MCF 10A (cell line): ENCODE measurements at regions of chr1 and their contacts with region 1.

Region 1: GRCh38 chr1:39954816-39955546 is at the start of gene MFSD2A:
- DNase-seq: peak; percentile 95
- H3K4me3 Mint-ChIP-seq: peak within 1 kb of the TSS; percentile 82
- H3K27ac Mint-ChIP-seq: peak within 1 kb of the TSS; percentile 88
- H3K4me1 Mint-ChIP-seq: peaks cover 22% of the 10 kb centered on the region
- H3K27me3 Mint-ChIP-seq: no peaks in the 10 kb centered on the region
- CTCF ChIP-seq: no peak
- total RNA-seq, gene MFSD2A: 49.1 and 52.9 TPM in 2 replicates

Region 2: DNA sequence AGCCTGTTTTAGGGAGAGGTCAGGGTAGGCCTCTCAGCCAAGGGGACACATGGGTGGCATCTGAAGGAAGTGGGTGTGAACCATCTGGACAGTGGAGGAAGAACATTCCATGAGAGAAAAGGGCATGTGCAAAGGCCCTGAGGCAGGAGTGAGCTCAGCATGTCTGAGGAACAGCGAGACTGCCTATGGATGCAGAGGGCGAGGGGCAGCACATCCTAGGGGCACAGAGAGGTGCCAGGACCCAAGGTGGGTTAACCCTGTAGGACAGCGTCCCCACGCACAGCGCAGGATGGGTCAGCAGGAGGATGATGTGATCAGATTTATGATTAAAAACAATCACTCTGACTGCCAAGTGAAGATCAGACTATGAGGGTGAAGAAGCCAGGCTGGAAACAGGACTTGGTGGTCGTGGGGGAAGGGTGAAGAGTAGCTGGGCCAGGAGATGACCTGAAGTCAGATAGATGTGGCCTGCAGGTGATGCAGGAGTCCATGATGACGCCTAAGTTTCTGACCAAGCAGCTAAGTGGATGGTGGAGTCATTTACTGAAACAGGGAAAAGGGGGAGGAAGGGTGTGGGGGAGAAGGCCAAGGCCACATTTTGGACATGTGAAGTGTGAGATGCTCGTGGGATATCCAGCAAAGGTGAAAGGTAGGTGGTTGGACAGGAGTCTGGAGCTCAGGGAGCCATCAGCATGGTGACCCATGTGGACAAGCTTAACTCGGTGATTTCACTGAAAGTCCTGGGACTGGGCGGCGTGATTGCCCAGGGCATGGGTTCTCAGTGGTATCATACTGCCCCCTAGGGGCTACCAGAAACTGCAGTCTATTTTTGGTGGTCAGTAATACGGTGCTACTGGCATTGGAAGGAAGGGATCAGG is 416.2 kb before region 1 on chr1:
- CTCF ChIA-PET with region 1: no interaction called
- POLR2A ChIA-PET with region 1: no interaction called
- intact Hi-C with region 1: no loop called
- DNase-seq: peak; percentile 74
- H3K4me3 Mint-ChIP-seq: no peak overlapping the region
- H3K27ac Mint-ChIP-seq: no peak overlapping the region
- H3K4me1 Mint-ChIP-seq: peaks cover 15% of the 10 kb centered on the region
- H3K27me3 Mint-ChIP-seq: no peaks in the 10 kb centered on the region
- CTCF ChIP-seq: peak; percentile 80

Region 3: DNA sequence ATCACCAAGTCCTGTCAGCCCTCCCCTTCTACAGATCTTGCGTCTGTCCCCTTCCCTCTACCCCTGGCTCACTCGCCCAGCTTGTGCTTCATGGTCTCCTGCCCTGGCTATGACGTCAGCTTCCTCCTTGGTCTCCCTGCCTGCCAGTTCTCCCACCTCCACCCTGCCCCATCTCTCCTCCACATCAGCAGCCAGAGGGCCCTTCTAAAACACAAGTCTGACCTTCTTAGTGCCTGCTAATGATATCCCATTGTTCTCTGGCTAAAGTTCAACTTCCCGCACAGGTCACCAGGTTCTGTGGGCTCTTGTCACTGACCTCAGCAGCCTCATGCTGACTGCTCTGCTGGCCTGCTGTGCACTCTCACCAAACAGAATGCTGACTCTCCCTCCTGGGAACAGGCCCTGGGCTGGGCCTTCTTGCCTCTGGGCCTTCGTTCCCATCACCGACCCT is 28.6 kb before region 1 on chr1:
- CTCF ChIA-PET with region 1: interaction called, 10 read pairs
- POLR2A ChIA-PET with region 1: interaction called, 139 read pairs
- intact Hi-C with region 1: no loop called
- DNase-seq: peak; percentile 63
- H3K4me3 Mint-ChIP-seq: peak overlapping the region; percentile 20
- H3K27ac Mint-ChIP-seq: peak overlapping the region; percentile 81
- H3K4me1 Mint-ChIP-seq: peaks cover 49% of the 10 kb centered on the region
- H3K27me3 Mint-ChIP-seq: no peaks in the 10 kb centered on the region
- CTCF ChIP-seq: no peak

Region 4: GRCh38 chr1:39933956-39934941 is 20.7 kb before region 1 on chr1:
- CTCF ChIA-PET with region 1: interaction called, 3 read pairs
- POLR2A ChIA-PET with region 1: interaction called, 139 read pairs
- intact Hi-C with region 1: loop called (anchors 1 kb)
- DNase-seq: peak; percentile 100
- H3K4me3 Mint-ChIP-seq: peak overlapping the region; percentile 15
- H3K27ac Mint-ChIP-seq: peak overlapping the region; percentile 71
- H3K4me1 Mint-ChIP-seq: peaks cover 32% of the 10 kb centered on the region
- H3K27me3 Mint-ChIP-seq: no peaks in the 10 kb centered on the region
- CTCF ChIP-seq: no peak

Region 5: GRCh38 chr1:39940252-39940651 is 14.7 kb before region 1 on chr1:
- CTCF ChIA-PET with region 1: interaction called, 4 read pairs
- POLR2A ChIA-PET with region 1: interaction called, 139 read pairs
- intact Hi-C with region 1: no loop called
- DNase-seq: no peak
- H3K4me3 Mint-ChIP-seq: no peak overlapping the region
- H3K27ac Mint-ChIP-seq: no peak overlapping the region
- H3K4me1 Mint-ChIP-seq: peaks cover 27% of the 10 kb centered on the region
- H3K27me3 Mint-ChIP-seq: no peaks in the 10 kb centered on the region
- CTCF ChIP-seq: no peak

Region 6: DNA sequence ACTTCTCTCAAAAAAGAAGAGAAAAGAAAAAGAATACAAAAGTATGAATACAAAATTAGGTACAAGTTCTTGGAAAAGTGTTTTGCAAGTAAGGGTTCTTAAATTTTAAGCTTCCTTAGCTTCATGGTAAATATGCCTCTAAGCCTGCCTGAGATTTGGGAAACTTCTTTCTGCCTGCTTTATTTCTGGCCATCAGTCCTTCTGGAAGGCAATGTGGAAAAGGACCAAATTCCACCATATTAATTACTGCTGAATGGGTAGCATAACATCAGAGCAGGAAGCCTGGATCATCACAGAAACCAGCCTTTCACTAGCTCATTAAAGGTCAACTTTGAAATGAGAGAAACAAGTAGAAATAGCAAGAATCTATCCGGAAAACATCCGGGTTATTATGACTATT is 46.5 kb after region 1 on chr1:
- CTCF ChIA-PET with region 1: no interaction called
- POLR2A ChIA-PET with region 1: no interaction called
- intact Hi-C with region 1: no loop called
- DNase-seq: no peak
- H3K4me3 Mint-ChIP-seq: no peak overlapping the region
- H3K27ac Mint-ChIP-seq: no peak overlapping the region
- H3K4me1 Mint-ChIP-seq: peaks cover 5% of the 10 kb centered on the region
- H3K27me3 Mint-ChIP-seq: no peaks in the 10 kb centered on the region
- CTCF ChIP-seq: no peak

Region 7: DNA sequence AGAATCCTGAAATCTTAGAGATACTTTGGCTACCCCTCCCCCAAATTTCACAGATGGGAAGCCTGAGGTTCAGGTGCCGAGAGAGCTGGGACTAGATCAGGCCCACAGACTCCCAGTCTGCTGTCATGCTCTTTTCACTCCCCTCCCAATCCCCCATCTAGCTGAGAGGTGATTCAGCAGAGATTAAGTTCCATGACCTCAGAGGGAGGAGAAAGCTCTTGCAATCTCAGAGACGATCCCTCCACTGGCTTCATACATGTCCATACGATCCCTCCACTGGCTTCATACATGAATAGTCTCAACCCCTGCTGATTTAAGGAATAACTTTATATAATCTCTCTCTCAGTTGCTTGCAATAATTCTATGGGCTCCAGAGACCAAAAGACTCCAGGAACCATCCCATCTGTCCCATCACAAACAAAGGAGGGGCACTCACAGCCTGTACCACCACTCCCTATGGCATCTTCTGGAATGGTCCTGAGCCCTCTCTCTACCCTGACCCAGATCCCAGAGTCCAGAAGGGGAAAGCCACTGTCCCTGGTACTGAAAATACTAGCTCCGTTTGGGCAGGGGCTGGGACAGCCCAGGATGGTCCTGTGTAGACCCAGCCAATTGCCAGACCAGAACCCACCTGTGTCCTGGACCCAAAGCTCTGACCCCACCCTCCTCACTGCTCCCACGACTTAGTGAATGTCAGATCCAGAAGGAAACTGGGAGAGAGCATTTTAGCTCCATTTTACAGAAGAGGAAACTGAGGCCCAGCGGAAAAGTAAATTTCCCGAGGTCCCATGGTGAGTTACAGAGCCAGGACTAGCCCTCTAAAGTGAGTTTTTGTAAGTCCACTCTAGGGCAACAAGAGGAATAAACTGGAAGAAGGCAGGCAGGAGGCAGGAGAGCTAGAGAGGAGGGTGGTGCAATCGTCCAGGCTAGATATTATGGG is 683.4 kb after region 1 on chr1:
- CTCF ChIA-PET with region 1: no interaction called
- POLR2A ChIA-PET with region 1: no interaction called
- intact Hi-C with region 1: no loop called
- DNase-seq: no peak
- H3K4me3 Mint-ChIP-seq: no peak overlapping the region
- H3K27ac Mint-ChIP-seq: no peak overlapping the region
- H3K4me1 Mint-ChIP-seq: peaks cover 5% of the 10 kb centered on the region
- H3K27me3 Mint-ChIP-seq: no peaks in the 10 kb centered on the region
- CTCF ChIP-seq: no peak